Lower leg skin (tissue), 4 donors: ENCODE measurements at regions of chr2 and their contacts with region 1.

Region 1: GRCh38 chr2:109348671-109349550 is 219.9 kb downstream of the SH3RF3 start:
- DNase-seq: peak in 1 of 2 donors; percentile 74
- H3K4me3 ChIP-seq: no peak overlapping the region
- CTCF ChIP-seq: no peak
- POLR2A ChIP-seq: no peak

Region 2: GRCh38 chr2:108194409-108195132 is 1154.3 kb before region 1 on chr2:
- intact Hi-C with region 1: loop called (anchors 10 kb)
- DNase-seq: no peak
- H3K4me3 ChIP-seq: no peak overlapping the region
- CTCF ChIP-seq: no peak
- POLR2A ChIP-seq: no peak